ENCODE measurements at regions of chr5 and their contacts with region 1.

Region 1: DNA sequence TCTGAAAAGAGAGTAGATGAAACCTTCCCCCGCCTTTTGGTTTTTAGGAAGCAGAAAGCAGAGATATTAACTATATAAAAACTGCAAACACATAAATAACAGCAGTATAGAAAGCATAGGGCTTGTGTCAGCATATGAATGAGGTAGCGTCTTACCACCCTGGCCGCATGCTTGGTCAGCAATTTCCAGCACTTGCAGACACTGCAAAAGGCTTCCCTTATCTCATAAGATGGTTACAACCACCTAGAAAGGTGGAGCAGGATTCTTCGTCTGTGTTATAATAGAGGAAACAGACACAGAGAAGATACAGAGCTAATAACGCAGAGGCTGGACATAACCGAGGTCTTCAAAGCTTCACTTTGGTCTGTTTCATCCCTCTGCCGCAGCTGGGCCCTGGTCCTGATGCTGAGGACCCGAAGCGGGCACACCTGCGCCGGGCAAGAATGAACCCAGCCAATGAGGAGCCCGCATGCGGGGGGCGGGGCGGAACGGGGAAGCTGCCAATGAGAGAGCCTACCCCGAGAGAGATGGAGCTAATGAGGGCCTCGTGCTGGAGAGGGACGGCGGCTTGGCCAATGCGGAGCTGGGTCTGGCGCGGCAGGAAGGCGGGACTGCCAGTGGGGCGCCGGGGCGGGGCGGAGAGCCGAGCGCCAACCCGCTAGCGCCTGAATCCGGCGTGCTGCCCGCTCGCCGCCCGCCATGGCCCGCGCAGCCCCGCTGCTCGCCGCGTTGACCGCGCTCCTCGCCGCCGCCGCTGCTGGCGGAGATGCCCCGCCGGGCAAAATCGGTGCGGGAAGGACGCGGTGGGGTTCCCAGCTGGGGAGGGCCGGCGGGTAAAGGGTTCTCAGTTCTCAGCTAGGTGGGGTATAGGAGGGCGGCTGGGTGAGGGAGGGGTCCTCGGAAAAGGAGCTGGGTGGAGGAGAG is at the start of gene PCYOX1L:
- DNase-seq: peak; percentile 90
- ATAC-seq: peak; percentile 98
- H3K4me3 ChIP-seq: peak within 1 kb of the TSS; percentile 89 to 90
- H3K27ac ChIP-seq: peak within 1 kb of the TSS; percentile 63
- H3K4me1 ChIP-seq: peaks cover 7 to 18% of the 10 kb centered on the region in 2 experiments; a peak in 3 of 4 replicates
- H3K27me3 ChIP-seq: no peaks in the 10 kb centered on the region
- CTCF ChIP-seq: no peak
- POLR2A ChIP-seq: peak; percentile 44
- RAD21 ChIP-seq: no peak
- total RNA-seq, gene PCYOX1L: 15.9 TPM

Region 2: DNA sequence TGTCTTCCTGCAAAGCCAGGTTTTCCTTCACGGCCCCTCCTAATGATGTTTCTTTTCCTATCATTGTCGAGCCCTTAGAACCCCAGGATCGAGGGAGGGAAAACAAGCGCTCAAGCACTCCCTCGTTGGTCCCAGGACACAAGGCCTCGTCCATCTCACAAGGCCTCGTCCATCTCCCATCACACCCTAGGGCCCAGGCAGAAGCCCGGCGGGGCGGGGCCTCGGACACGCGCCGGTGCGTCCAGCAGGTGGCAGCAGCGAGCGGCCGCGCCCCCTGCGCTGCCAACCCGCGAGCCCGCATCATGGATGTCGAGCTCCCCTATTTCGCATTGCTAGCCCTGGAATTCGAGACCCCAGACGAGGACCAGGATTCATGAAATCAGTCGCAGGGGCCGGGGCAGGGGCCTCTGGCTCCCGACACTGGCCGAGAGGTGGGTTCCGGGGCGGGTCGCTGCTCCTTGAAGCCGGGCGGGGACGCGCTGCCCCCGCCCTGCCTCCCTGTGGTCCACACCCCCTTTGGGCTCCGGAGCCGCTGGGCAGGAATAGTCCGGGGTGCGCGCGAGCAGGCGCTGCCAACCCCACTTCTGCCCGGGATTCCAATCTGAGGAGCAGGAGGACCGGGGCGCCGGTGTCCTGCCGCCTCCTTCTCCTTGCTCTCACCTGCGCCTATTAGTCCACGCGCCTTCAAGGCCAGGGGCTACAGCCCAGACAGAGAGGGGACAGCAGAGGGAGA is 216.2 kb before region 1 on chr5 and contains the start of gene ABLIM3:
- CTCF ChIA-PET with region 1: no interaction called
- POLR2A ChIA-PET with region 1: no interaction called
- RAD21 ChIA-PET with region 1: no interaction called
- intact Hi-C with region 1: no loop called
- DNase-seq: no peak
- ATAC-seq: peak; percentile 91
- H3K4me3 ChIP-seq: peak within 1 kb of the TSS; percentile 65 to 76
- H3K27ac ChIP-seq: peak within 1 kb of the TSS; percentile 30; the same call in 1 of the 2 replicates
- H3K4me1 ChIP-seq: peaks cover 4 to 25% of the 10 kb centered on the region in 2 experiments; a peak in 2 of 4 replicates
- H3K27me3 ChIP-seq: no peaks in the 10 kb centered on the region
- CTCF ChIP-seq: peak in 2 of 3 experiments; percentile 88 to 89; a peak in 4 of 6 replicates
- POLR2A ChIP-seq: no peak
- RAD21 ChIP-seq: no peak
- total RNA-seq, gene ABLIM3: 14.3 TPM

Region 3: DNA sequence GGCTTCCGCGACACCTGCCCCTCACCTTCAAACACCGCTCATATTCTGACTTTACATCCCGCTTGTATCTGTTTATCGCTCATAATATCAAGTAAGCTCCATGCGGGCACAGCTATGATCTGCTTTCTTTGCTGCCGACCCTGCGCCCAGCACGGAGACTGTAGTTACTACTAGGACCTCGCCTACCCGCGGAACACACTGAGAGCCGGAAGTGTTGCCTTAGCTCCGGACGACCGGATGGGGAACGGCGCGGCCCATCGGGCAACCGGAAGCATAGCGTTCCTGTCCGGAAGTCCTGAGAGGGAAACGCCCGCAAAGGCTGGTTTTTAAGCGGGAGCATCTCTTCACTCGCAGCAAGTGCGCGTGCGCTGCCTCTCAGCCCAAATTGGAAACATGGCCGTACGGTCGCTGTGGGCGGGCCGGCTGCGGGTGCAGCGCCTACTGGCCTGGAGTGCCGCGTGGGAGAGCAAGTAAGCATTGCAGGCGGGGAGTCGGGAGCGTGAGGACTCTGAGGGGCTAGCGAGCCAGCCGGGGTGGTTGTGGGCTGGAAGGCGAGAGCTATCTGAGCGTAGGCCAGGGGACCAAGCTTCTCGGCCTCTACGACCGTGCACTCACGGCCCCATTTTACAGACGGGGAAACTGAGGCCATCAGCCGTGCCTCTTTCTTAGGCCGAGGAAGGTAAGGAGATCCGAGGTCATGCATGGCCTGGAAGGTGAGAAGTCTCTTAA is 12.3 kb before region 1 on chr5 and contains the start of gene GRPEL2:
- CTCF ChIA-PET with region 1: interaction called, 6 read pairs
- POLR2A ChIA-PET with region 1: interaction called, 18 read pairs
- RAD21 ChIA-PET with region 1: no interaction called
- intact Hi-C with region 1: loop called (anchors 1 kb)
- DNase-seq: peak; percentile 96
- ATAC-seq: peak; percentile 96
- H3K4me3 ChIP-seq: peak within 1 kb of the TSS; percentile 94 to 97
- H3K27ac ChIP-seq: peak within 1 kb of the TSS; percentile 79
- H3K4me1 ChIP-seq: peaks cover 5 to 11% of the 10 kb centered on the region in 2 experiments; a peak in 3 of 4 replicates
- H3K27me3 ChIP-seq: no peaks in the 10 kb centered on the region
- CTCF ChIP-seq: no peak
- POLR2A ChIP-seq: peak; percentile 88
- RAD21 ChIP-seq: no peak
- total RNA-seq, gene GRPEL2: 48.9 TPM